Activated CD4-positive, alpha-beta T cell treated with anti-CD3 and anti-CD28 coated beads, Interleukin-2, amount 10 ng/mL, durations not matched to agents 24 days and 14 days (primary cell): ENCODE measurements at regions of chr4 and their contacts with region 1.

Region 1: DNA sequence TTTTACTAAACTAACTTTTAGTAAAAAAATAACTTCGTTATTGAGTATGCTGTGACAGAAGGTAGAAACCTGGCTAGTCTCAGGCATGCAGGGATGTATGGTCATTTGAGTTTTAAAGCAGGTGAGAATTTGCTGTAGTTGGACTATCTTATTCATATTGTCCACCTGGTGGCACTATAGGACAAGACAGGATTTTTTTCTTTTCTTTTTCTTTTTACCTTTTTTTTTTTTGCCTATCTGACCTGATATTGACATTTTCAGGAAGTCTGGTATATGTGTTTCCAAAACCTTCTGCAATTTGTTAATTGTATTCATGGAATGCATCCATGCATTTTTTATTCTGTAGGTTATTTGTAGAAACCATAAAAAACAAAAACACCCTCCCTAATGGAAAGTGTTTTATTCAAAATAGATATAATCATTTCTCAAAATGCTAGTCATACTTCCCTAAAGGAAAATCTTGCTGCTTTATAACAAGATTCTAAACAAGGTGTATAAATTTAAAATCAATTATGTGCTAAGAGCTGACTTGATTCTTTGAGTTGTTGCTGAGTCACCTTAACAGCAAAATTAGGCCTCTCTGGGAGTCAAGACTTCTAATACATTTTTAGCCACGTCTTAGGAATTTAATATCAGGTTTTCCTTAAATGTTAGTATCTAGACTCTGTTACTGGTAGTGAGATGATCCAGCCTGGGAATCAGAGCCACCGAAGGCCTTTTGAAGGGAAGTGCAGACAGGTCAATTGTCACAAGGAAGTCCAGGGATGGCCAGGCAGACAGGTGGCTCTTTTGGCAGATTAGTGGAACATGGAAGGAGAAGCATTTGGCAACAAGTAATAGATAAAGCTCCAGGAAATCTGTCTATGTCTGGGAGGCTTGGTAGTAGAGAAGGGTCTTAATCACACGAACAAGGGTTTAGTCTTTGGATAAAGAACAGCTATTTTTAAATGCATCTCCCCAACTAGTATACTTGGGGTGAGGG is 201.3 kb upstream of the GNPDA2 start:
- DNase-seq: no peak
- H3K4me3 Mint-ChIP-seq: no peak overlapping the region
- H3K27ac Mint-ChIP-seq: no peak overlapping the region
- H3K4me1 Mint-ChIP-seq: no peaks in the 10 kb centered on the region
- H3K27me3 Mint-ChIP-seq: no peaks in the 10 kb centered on the region

Region 2: GRCh38 chr4:44978020-44978419 is 50.3 kb after region 1 on chr4:
- intact Hi-C with region 1: loop called (anchors 5 kb)
- DNase-seq: no peak
- H3K4me3 Mint-ChIP-seq: no peak overlapping the region
- H3K27ac Mint-ChIP-seq: no peak overlapping the region
- H3K4me1 Mint-ChIP-seq: no peaks in the 10 kb centered on the region
- H3K27me3 Mint-ChIP-seq: no peaks in the 10 kb centered on the region

Region 3: GRCh38 chr4:45316257-45316656 is 388.6 kb after region 1 on chr4:
- intact Hi-C with region 1: no loop called
- DNase-seq: no peak
- H3K4me3 Mint-ChIP-seq: no peak overlapping the region
- H3K27ac Mint-ChIP-seq: no peak overlapping the region
- H3K4me1 Mint-ChIP-seq: no peaks in the 10 kb centered on the region
- H3K27me3 Mint-ChIP-seq: no peaks in the 10 kb centered on the region